Astrocyte of the spinal cord (primary cell): ENCODE measurements at regions of chr3 and their contacts with region 1.

Region 1: DNA sequence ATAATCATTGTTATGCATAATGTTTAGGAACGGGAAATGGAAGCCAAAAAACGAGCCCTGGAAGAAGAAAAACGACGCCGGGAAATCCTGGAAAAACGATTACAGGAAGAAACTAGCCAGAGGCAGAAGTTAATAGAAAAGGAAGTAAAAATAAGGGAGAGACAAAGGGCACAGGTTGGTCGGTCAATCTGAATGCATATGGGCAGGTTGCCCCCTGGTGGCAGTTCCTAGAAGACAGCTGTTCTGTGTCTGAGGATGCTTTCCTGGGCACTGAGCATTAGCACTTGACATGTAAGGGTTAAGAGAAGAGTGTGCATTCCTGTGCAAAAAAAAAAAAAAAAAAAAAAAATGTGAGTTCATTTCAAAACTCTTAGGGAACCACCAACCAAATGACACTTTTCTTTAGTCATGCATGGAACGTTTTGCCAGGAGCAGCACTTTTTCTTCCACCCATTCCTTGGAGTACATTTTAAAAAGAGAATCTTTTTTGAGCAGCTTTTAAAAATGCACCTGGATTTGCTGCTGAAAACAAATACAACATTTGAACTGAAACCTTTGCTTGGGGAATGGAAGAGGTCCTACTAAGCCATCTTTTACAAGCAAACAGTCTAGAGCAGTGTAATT is 11.1 kb upstream of the ABHD10 start:
- DNase-seq: peak; percentile 79
- H3K4me3 ChIP-seq: no peak overlapping the region
- CTCF ChIP-seq: peak; percentile 83

Region 2: GRCh38 chr3:111737706-111738086 is 230.1 kb before region 1 on chr3:
- in situ Hi-C with region 1: loop called (anchors 25 kb)
- DNase-seq: peak; percentile 98
- H3K4me3 ChIP-seq: no peak overlapping the region
- CTCF ChIP-seq: no peak